ENCODE measurements at regions of chr11 and their contacts with region 1.

Region 1: DNA sequence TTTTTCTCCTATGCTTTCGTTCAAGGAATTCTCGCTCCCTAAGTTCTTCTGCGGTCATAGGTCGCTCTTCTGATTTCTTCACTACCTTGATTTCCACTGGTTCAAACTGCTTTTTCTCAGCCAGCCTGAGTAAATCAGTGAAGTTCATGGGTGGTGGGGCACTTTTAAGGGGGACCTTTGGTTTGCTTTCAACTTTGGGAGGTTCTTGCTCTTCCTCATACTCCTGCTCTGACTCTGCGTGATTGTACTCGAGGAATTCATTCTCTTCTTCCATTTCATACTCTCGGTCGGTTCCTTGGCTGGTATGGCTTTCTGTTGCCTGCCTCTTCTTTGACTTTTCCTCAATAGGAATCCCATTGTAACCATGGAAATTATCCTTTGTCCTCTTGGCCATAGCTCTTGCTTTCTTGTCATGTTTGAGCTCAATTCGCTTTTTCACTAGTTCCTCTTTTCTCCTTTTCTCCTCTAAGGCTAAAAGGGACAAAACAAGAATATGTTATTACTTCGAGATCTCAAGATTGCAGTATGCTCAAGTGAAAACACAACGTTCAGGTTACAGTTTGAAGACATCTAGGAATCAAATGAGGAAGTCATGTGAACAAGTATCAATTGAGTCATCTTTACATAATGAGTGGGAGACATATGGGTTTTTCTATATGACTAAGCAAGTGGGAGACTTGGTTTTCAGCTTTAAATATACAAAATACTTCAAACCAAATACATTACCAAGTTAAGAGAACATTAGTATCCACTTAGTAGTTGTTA is 16.2 kb downstream of the MISFA start:
- DNase-seq: no peak
- H3K4me3 Mint-ChIP-seq: peak overlapping the region; percentile 77
- H3K27ac Mint-ChIP-seq: peak overlapping the region; percentile 85
- H3K4me1 Mint-ChIP-seq: peaks cover 44% of the 10 kb centered on the region
- H3K27me3 Mint-ChIP-seq: no peaks in the 10 kb centered on the region

Region 2: GRCh38 chr11:18277565-18278271 is 338.1 kb before region 1 on chr11:
- intact Hi-C with region 1: no loop called
- DNase-seq: no peak
- H3K4me3 Mint-ChIP-seq: no peak overlapping the region
- H3K27ac Mint-ChIP-seq: no peak overlapping the region
- H3K4me1 Mint-ChIP-seq: peaks cover 22% of the 10 kb centered on the region
- H3K27me3 Mint-ChIP-seq: no peaks in the 10 kb centered on the region

Region 3: DNA sequence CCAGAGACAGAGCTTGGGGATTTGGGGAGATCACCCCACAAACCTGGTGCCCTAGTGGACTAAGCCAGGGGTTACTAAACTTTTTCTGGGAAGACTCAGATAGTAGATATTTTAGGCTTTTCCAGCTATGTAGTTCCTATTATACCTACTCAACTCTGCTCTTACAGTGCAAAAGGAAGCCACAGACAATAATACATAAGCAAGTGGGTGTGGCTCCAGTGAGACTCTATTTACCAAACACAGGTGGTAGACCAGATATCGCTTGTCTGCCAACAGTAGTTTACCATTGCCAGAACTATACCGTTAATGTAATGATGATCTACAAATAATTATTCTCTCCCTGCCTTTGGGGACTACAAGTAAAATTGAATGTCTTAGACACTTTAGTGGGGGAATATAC is 196.8 kb before region 1 on chr11:
- intact Hi-C with region 1: no loop called
- DNase-seq: no peak
- H3K4me3 Mint-ChIP-seq: no peak overlapping the region
- H3K27ac Mint-ChIP-seq: no peak overlapping the region
- H3K4me1 Mint-ChIP-seq: peaks cover 2% of the 10 kb centered on the region
- H3K27me3 Mint-ChIP-seq: no peaks in the 10 kb centered on the region

Region 4: DNA sequence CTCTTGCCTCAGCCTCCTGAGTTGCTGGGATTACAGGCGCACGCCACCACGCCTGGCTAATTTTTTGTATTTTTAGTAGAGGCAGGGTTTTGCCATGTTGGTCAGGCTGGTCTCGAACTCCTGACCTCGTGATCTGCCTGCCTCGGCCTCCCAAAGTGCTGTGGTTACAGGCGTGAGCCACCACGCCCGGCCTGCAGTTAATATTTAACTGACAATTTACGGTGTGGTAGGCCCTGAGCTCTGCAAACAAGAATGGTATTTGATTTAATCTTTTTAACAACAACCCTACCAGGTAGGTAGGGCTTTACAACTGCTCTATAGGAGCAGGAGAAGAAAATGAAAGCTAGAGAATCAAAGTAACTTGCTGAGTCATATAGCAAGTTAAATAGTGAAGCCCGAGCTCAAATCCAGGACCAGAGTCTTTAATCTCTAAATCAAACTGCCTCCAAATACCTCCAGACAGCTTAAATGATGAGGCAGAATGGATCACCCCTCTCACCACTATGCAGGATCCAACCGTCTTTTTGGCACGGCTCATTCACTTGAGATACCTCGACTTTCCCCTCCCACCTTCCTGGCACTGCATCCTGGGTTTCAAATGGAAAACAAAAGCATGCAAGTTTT is 36.7 kb before region 1 on chr11:
- intact Hi-C with region 1: loop called (anchors 2 kb)
- DNase-seq: peak; percentile 77
- H3K4me3 Mint-ChIP-seq: peak overlapping the region; percentile 75
- H3K27ac Mint-ChIP-seq: peak overlapping the region; percentile 69
- H3K4me1 Mint-ChIP-seq: peaks cover 27% of the 10 kb centered on the region
- H3K27me3 Mint-ChIP-seq: no peaks in the 10 kb centered on the region

Region 5: GRCh38 chr11:18588297-18589252 is 27.2 kb before region 1 on chr11 and contains the start of gene UEVLD:
- intact Hi-C with region 1: loop called (anchors 1 kb)
- DNase-seq: peak; percentile 91
- H3K4me3 Mint-ChIP-seq: no peak within 1 kb of the TSS
- H3K27ac Mint-ChIP-seq: no peak within 1 kb of the TSS
- H3K4me1 Mint-ChIP-seq: peaks cover 12% of the 10 kb centered on the region
- H3K27me3 Mint-ChIP-seq: no peaks in the 10 kb centered on the region
- total RNA-seq, gene UEVLD: 19.2 and 20.7 TPM in 2 replicates

Region 6: GRCh38 chr11:18650859-18651557 is 35.2 kb after region 1 on chr11:
- intact Hi-C with region 1: no loop called
- DNase-seq: peak; percentile 86
- H3K4me3 Mint-ChIP-seq: no peak overlapping the region
- H3K27ac Mint-ChIP-seq: no peak overlapping the region
- H3K4me1 Mint-ChIP-seq: peaks cover 8% of the 10 kb centered on the region
- H3K27me3 Mint-ChIP-seq: no peaks in the 10 kb centered on the region

Region 7: GRCh38 chr11:18669220-18669598 is 53.4 kb after region 1 on chr11:
- intact Hi-C with region 1: loop called (anchors 5 kb)
- DNase-seq: peak; percentile 68
- H3K4me3 Mint-ChIP-seq: peak overlapping the region; percentile 39
- H3K27ac Mint-ChIP-seq: peak overlapping the region; percentile 62
- H3K4me1 Mint-ChIP-seq: peaks cover 34% of the 10 kb centered on the region
- H3K27me3 Mint-ChIP-seq: peaks cover 12% of the 10 kb centered on the region

Measured in activated CD4-positive, alpha-beta T cell treated with anti-CD3 and anti-CD28 coated beads, Interleukin-2, amount 10 ng/mL, durations not matched to agents 24 days and 14 days (primary cell).